Heart right ventricle (tissue), 16 donors: ENCODE measurements at regions of chr10 and their contacts with region 1.

Region 1: DNA sequence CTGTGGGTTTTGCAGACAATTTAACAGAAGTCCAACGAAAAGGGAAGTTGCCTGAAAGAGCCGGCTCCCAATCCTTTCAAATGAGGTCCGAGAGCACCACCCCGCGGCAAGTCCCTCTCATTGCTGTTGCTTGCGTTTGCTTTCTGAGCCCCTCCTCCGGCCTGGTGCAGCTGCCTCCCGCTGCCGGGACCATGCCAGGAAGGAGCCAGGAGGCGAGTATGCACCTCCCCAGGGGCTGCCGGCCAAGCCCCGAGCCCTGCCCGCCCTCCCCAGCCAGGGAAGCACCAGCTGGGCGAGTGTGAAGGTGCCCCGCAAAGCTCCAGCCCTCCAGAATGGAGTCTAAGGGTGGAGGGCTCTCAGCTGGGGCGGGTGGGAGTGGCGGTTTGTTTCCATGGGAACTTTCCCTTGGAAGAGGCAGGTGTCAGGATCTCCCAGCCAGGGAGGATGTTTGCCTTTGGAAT is 25.8 kb upstream of the PPP2R2D start:
- DNase-seq: peak; percentile 61 to 74
- ATAC-seq: peak; percentile 49 to 84 (median 70)
- H3K4me3 ChIP-seq: peak overlapping the region in 1 of 10 donors; percentile 18
- H3K27ac ChIP-seq: no peak overlapping the region
- H3K4me1 ChIP-seq: peaks cover 0 to 9% (median 4%) of the 10 kb centered on the region in 9 donors
- H3K27me3 ChIP-seq: peaks cover 0 to 54% (median 45%) of the 10 kb centered on the region in 7 donors
- CTCF ChIP-seq: peak; percentile 39 to 79 (median 71)

Region 2: DNA sequence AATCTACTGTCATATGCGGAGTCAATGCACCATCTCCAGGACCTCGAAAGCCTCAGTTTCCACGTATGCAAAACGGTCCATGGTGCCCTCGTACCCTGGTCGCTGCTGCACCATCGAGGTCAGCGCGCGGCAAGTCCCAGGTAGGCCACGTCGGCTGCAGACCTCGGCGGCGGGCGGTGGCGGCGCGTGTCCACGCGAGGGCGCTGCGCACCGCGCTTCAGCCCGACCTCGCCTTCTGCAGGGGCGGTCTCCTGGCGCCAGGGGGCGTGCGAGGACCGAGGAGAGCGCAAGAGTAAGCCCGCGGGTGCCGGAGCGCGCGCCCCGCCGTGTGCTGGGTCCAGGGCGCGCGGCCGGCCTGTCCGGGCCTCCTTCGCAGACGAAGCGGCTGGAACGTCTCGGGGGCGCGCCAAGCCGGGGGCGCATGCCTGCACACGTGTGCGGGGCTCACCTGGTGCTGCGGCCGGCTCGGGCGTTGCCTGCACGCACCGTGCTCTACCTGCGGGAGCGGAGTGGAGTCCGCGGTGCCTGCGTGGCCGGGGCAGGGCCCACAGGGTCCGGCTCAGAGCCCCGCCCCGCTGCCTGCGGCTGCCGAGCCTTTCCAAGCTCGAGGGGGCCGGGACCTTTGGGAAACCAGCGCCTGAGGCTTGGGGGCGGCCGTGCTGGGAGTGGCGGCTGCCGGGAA is 1684.8 kb before region 1 on chr10:
- intact Hi-C with region 1: loop called in 8 of 10 experiments (anchors 5 to 10 kb)
- DNase-seq: peak; percentile 85 to 90
- ATAC-seq: peak; percentile 84 to 93 (median 88)
- H3K4me3 ChIP-seq: peak overlapping the region; percentile 23 to 68 (median 64)
- H3K27ac ChIP-seq: peak overlapping the region in 2 of 10 donors; percentile 34 to 42
- H3K4me1 ChIP-seq: peaks cover 3 to 23% (median 8%) of the 10 kb centered on the region in 9 donors
- H3K27me3 ChIP-seq: peaks cover 0 to 15% (median 0%) of the 10 kb centered on the region in 7 donors
- CTCF ChIP-seq: peak; percentile 100

Region 3: DNA sequence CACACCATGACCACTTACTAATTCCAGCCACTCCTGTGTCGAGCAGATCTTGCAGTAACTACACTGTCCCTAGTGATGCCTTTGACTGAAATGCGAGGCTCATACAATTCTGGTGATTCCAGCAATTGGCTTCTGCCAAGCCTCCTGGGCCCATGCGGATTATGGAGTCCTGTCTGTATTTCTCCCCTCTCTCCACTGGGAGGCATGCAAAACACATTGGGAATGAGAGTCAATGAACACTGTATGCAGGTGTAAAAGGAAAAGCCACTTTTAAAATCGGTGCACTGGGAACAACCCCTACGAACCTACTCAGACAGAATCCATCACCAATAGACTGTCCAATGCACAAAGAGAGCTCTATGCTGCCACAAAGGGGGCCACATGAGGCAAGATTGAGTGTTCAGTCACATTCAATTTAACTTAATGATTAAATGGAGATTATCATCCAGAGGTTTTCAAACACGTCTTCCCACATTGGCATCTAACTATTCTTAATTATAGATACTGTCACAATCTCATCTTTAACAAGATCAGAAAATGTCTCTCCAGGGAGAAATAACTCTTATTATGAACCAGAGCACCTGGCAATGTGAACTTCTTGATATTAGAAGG is 1188.2 kb before region 1 on chr10:
- intact Hi-C with region 1: loop called in 2 of 10 experiments (anchors 10 kb)
- DNase-seq: no peak
- ATAC-seq: peak in 1 of 8 donors; percentile 34
- H3K4me3 ChIP-seq: no peak overlapping the region
- H3K27ac ChIP-seq: no peak overlapping the region
- H3K4me1 ChIP-seq: no peaks in the 10 kb centered on the region
- H3K27me3 ChIP-seq: peaks cover 0 to 5% (median 0%) of the 10 kb centered on the region in 7 donors
- CTCF ChIP-seq: peak in 7 of 9 donors; percentile 27 to 43 (median 35)

Region 4: DNA sequence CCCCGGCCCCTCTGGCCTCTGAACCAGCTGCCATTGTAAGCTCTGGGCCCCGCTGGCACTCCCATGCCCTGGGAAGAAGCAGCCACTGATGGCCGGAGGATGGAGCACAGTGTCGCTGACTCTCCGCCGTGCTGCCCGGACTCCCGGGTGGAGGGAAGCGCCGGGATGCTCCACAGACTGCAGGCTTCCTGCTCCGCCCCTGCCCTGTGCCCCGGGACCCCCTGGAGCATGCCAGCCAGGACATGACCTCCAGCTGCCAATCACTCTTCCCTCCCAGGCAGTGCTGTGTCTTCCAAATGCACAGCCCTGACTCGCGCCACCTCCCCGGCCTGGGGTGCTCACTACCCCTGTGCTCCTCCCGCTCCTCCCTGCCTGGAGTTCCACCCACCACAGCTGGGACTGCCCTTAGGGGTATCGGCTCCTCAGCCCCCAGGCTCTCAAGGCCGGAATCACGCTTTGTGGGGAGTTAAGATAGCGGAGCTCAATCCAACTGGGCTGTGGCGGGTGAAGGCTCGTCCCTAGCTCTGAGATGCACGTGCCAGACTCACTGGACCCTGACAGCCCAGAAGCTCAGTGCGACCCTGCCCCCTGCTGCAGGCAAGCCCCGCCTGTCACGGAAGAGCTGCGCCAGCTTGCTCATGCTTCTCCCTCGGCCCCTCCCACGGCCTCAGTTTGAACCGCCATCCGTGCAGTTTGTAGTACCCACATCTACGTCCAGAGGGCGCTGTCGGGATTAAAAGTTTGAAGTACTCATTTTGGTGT is 421.2 kb before region 1 on chr10:
- intact Hi-C with region 1: loop called in 5 of 10 experiments (anchors 2 to 10 kb)
- DNase-seq: peak; percentile 62 to 64
- ATAC-seq: peak; percentile 52 to 80 (median 68)
- H3K4me3 ChIP-seq: peak overlapping the region in 9 of 10 donors; percentile 3 to 52 (median 35)
- H3K27ac ChIP-seq: no peak overlapping the region
- H3K4me1 ChIP-seq: peaks cover 0 to 12% (median 8%) of the 10 kb centered on the region in 9 donors
- H3K27me3 ChIP-seq: peaks cover 0 to 75% (median 62%) of the 10 kb centered on the region in 7 donors
- CTCF ChIP-seq: peak; percentile 56 to 94 (median 83)

Region 5: DNA sequence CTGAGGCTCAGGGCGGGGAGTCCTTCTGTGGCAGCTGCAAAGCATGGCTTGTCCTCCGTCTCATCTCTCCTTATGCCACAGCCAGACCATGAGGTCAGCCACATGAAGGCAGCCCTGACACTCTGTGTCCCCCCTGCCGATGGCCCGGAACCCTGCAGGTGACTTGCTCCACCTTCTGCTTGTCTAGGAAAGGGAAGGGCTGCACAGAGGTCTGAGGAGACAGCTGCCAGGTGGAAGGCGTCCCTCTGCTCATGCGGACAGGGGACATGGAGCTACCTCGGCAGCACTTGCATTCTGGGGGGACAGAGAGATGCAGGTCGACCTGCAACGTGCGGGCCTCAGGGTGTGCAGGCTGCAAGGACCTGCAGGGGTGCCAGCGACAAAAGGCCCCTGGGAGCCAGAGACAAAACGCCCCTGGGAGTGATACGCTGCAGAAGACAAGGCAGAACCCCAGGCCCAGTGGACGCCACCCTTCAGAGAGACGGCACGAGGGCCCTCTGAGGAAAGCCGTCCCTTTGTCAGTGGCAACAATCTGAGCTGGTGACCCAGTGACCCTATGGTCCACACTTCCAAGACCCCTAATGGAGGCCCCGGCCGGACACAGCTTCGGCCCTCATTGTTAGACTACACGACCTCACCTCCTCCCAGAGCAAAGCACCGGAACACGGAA is 179.4 kb before region 1 on chr10:
- intact Hi-C with region 1: no loop called
- DNase-seq: no peak
- ATAC-seq: no peak
- H3K4me3 ChIP-seq: no peak overlapping the region
- H3K27ac ChIP-seq: no peak overlapping the region
- H3K4me1 ChIP-seq: no peaks in the 10 kb centered on the region
- H3K27me3 ChIP-seq: peaks cover 0 to 35% (median 17%) of the 10 kb centered on the region in 7 donors
- CTCF ChIP-seq: no peak

Region 6: GRCh38 chr10:131928248-131929095 is 53.5 kb after region 1 on chr10:
- intact Hi-C with region 1: no loop called
- DNase-seq: peak in 1 of 2 donors; percentile 43
- ATAC-seq: peak in 2 of 8 donors; percentile 16 to 39
- H3K4me3 ChIP-seq: no peak overlapping the region
- H3K27ac ChIP-seq: peak overlapping the region in 6 of 10 donors; percentile 31 to 60 (median 52)
- H3K4me1 ChIP-seq: peaks cover 0 to 82% (median 65%) of the 10 kb centered on the region in 9 donors
- H3K27me3 ChIP-seq: no peaks in the 10 kb centered on the region
- CTCF ChIP-seq: no peak